PC-9 (cell line): ENCODE measurements at regions of chr19 and their contacts with region 1.

Region 1: DNA sequence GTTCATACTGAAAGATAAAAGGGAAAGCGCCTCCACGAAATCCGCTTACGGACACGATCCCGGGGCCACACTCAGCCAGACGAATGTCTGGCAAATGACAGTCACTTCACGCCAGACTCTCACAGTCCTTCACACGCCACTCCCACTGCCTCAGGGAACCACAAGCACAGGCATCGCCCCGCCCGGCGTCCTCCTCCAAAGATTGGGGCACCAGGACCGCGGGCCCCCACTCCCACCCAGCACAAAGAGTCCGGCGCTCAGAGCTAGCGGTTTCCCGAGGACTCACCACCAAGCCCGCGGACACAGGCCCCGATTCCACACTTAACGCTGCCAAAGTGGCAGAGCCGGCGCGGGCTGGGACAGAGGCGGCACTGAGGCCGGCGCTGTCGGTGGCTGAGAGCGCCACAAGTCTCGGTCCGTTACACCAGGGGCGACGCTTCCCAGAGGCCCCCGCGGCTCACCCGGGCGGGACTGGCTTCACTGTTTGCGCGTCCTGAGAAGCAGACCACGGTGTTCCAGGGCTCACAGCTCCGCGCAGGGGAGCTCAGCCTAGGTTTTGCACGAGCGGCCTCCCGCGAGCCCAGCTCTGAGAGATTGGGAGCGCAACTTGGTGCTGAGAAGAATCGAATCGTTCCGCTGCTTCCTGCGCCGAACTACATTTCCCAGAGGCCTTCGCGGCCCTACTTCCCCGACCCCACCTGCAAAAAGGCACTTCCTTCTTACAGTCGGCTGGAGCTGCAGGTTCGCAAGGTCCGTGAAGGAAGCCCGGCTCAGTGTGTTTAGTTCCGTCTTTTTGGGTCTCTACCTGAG is at the start of gene ZNF569:
- DNase-seq: peak; percentile 79 to 86
- H3K4me3 ChIP-seq: peak within 1 kb of the TSS; percentile 74
- H3K27ac ChIP-seq: no peak within 1 kb of the TSS
- H3K4me1 ChIP-seq: peaks cover 11% of the 10 kb centered on the region; the same call in 1 of the 2 replicates
- H3K27me3 ChIP-seq: no peaks in the 10 kb centered on the region
- CTCF ChIP-seq: no peak
- total RNA-seq, gene ZNF569: 1.5 and 3.3 TPM in 2 replicates

Region 2: GRCh38 chr19:35476149-35476548 is 1990.9 kb before region 1 on chr19:
- CTCF ChIA-PET with region 1: no interaction called
- POLR2A ChIA-PET with region 1: no interaction called
- intact Hi-C with region 1: no loop called
- DNase-seq: no peak
- H3K4me3 ChIP-seq: no peak overlapping the region
- H3K27ac ChIP-seq: no peak overlapping the region
- H3K4me1 ChIP-seq: no peaks in the 10 kb centered on the region
- H3K27me3 ChIP-seq: no peaks in the 10 kb centered on the region
- CTCF ChIP-seq: peak; percentile 40; the same call in 1 of the 2 replicates

Region 3: DNA sequence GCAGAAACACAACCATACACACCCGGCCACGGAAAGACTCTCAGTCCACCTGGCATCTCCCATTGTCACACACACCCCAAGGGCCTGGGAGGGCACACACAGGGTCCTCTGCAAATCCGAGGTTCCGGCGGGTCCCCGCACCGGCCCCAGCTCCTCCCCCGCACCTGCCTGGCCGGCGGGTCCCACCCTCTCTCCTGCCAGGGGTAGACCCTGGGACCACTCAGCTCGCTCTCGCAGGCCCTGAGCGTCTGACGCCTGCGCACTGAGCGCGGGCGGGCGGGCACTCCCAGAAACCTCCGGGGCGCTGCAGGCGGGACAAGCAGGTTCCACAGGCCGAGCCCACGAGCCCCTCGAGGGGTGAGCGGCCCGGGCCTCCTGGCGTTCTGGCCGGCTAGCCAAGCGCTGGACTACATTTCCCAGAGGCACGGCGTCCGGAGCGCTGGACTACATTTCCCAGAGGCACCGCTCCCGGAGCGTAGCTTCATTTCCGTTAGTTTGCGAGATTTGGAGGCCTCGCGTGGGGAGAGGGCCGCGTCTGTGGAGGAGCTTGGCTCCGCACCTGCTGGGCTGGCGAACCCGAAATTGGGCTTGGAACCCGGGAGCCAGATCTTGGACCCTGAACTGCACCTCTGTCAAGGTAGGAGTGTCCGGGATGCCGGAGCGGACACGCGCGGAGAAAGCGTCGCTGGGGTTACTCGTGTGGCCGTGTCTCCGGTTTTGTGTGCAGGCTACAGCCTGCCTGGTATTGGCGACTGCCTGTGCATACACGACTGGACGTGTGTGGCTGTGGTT is 388.9 kb before region 1 on chr19 and contains the start of gene ZNF420:
- CTCF ChIA-PET with region 1: no interaction called
- POLR2A ChIA-PET with region 1: interaction called, 8 read pairs
- intact Hi-C with region 1: loop called (anchors 5 kb)
- DNase-seq: peak; percentile 90 to 94
- H3K4me3 ChIP-seq: peak within 1 kb of the TSS; percentile 96
- H3K27ac ChIP-seq: peak within 1 kb of the TSS; percentile 27
- H3K4me1 ChIP-seq: peaks cover 7% of the 10 kb centered on the region
- H3K27me3 ChIP-seq: no peaks in the 10 kb centered on the region
- CTCF ChIP-seq: no peak
- total RNA-seq, gene ZNF420: 4.7 and 8.7 TPM in 2 replicates

Region 4: DNA sequence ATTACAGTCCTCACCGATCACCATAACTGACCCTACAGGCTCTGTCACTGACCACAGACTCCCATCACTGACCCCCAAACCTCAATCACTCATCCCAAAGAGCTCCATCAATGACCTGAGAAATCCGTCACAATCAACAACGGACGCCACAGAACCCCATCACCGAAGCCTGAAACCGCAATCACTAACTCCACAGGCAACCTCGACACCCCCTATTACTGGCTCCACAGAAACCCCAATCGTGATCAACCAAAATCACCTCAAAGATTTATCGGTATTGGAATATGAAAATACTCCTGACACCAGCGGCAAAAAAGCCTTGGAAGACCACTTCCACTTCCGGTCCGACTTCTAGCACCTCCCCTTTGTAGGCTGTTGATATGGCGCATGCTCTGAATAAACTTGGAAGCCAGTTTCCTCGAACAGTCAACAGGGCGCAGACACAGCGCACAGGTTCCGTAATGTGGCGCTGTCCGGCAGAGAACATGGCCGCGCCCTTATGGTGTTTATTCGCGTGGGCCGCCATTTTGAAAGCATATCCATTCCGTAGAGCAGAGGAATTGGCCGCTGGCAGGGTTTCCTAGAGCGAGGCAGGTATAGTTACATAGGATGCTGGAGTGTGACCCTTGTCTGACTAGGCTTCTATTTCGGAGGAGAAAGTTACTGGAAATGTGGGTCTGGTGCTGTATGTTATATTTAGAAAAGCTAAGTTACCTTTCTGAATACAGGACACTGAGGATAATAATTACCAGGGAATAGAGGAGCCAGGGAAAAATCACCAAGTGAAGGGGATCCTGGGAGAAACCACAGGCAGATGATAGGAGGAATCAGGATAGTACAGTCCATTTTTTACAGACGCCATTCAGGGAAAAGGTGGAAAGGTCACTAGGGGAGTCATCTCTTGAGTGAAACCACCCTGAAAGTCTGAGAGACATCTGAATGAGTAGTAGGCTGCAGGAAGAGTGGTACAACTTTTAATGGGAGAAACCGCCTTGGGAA is 294.3 kb before region 1 on chr19 and contains the start of gene ZNF585A:
- CTCF ChIA-PET with region 1: no interaction called
- POLR2A ChIA-PET with region 1: no interaction called
- intact Hi-C with region 1: loop called (anchors 5 kb)
- DNase-seq: peak; percentile 90 to 93
- H3K4me3 ChIP-seq: peak within 1 kb of the TSS; percentile 89
- H3K27ac ChIP-seq: 0 out of 2 replicates have a peak within 1 kb of the TSS, but pooled peaks have one; percentile 3
- H3K4me1 ChIP-seq: no peaks in the 10 kb centered on the region; the same call in 1 of the 2 replicates
- H3K27me3 ChIP-seq: no peaks in the 10 kb centered on the region
- CTCF ChIP-seq: no peak
- total RNA-seq, gene ZNF585A: 9.9 and 13.8 TPM in 2 replicates

Region 5: GRCh38 chr19:37370880-37371661 is 95.9 kb before region 1 on chr19 and contains the start of gene ZNF527:
- CTCF ChIA-PET with region 1: no interaction called
- POLR2A ChIA-PET with region 1: interaction called, 3 read pairs
- intact Hi-C with region 1: loop called (anchors 1 kb)
- DNase-seq: peak; percentile 90 to 95
- H3K4me3 ChIP-seq: peak within 1 kb of the TSS; percentile 85
- H3K27ac ChIP-seq: no peak within 1 kb of the TSS
- H3K4me1 ChIP-seq: 0 out of 2 replicates have a peak, but pooled peaks cover 4% of the 10 kb centered on the region
- H3K27me3 ChIP-seq: no peaks in the 10 kb centered on the region
- CTCF ChIP-seq: no peak
- total RNA-seq, gene ZNF527: 2.9 and 3.2 TPM in 2 replicates

Region 6: DNA sequence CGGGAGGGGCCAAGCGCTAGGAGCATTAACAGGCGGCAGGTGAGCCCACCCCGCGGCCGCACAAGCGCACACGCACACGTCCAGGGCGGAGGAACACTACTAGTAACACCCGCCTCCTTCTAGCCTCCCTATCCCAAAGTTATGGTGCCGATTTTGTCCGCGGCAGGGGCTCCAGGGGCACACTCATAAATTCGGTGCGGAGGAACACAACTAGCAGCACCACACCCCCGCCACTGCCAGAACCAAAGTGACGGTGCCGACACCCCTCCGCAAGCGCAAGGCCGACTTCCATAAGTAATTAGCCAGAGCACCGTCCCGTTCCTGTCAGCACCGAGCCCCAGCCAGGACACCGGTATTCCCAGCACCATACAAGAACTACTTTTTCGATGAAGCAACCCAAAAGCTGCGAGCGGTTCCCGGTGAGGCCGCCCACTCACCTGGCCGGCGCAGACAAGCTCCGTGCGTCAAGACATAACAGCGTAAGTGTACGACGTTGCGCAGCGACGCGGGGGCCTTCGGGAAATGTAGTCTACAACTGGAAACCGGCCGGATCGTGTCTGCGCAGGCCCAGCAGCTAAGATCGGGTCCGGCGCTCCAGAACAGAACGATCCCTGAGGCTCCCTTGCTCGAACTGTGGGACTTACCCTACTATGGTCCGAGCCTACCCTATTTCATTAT is 127.4 kb after region 1 on chr19 and contains the starts of genes ZNF540 and ZNF571:
- CTCF ChIA-PET with region 1: no interaction called
- POLR2A ChIA-PET with region 1: no interaction called
- intact Hi-C with region 1: loop called (anchors 1 kb)
- DNase-seq: peak; percentile 87 to 90
- H3K4me3 ChIP-seq: peak within 1 kb of the TSS; percentile 75
- H3K27ac ChIP-seq: peak within 1 kb of the TSS; percentile 68
- H3K4me1 ChIP-seq: peaks cover 18% of the 10 kb centered on the region; the same call in 1 of the 2 replicates
- H3K27me3 ChIP-seq: no peaks in the 10 kb centered on the region
- CTCF ChIP-seq: no peak
- total RNA-seq, gene ZNF540: 0.25 and 0.37 TPM in 2 replicates
- total RNA-seq, gene ZNF571: 2.1 and 2.2 TPM in 2 replicates